ENCODE measurements at regions of chr17 and their contacts with region 1.

Region 1: GRCh38 chr17:11935734-11936406 is 61.4 kb downstream of the ZNF18 start:
- DNase-seq: peak; percentile 57
- H3K4me3 ChIP-seq: peak overlapping the region in 1 of 2 experiments; percentile 41; a peak in 1 of 4 replicates
- H3K27ac ChIP-seq: no peak overlapping the region
- H3K4me1 ChIP-seq: no peaks in the 10 kb centered on the region
- H3K27me3 ChIP-seq: no peaks in the 10 kb centered on the region
- CTCF ChIP-seq: peak; percentile 50
- EP300 ChIP-seq: no peak
- RAD21 ChIP-seq: peak; percentile 84

Region 2: DNA sequence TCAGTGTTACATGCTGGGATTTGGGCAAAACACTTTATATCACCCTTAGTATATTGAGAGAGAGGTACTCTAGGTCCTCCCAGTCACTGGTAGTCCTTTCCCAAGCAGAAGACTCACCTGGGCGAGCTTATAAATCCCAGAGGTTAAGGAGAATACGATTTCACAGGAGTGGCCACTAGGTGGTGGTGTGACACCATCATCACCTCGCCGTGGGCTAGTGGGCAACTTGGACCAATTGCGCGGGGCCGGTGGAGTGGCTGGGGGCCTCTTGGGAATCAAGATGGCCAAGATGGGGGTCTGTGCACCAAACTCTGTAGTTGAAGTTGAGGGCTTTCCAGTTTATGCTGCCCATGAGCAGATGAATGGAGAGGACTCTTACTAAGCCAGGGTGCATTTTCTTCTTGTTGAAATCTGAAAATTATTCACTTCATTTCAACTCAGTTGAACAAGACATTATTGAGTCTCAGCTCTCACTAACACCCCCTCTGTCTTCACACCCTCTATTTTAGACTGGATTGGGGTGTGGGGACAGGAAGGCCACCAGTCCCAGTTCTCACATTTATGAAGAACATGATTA is 1059.8 kb before region 1 on chr17:
- CTCF ChIA-PET with region 1: interaction called, 54 read pairs
- POLR2A ChIA-PET with region 1: no interaction called
- DNase-seq: peak; percentile 58
- H3K4me3 ChIP-seq: no peak overlapping the region; a peak in 1 of 4 replicates
- H3K27ac ChIP-seq: no peak overlapping the region
- H3K4me1 ChIP-seq: no peaks in the 10 kb centered on the region
- H3K27me3 ChIP-seq: no peaks in the 10 kb centered on the region
- CTCF ChIP-seq: peak; percentile 55
- EP300 ChIP-seq: no peak
- RAD21 ChIP-seq: peak; percentile 77

Region 3: GRCh38 chr17:11857006-11857405 is 78.9 kb before region 1 on chr17:
- CTCF ChIA-PET with region 1: no interaction called
- POLR2A ChIA-PET with region 1: no interaction called
- DNase-seq: no peak
- H3K4me3 ChIP-seq: no peak overlapping the region
- H3K27ac ChIP-seq: no peak overlapping the region
- H3K4me1 ChIP-seq: no peaks in the 10 kb centered on the region
- H3K27me3 ChIP-seq: no peaks in the 10 kb centered on the region
- CTCF ChIP-seq: no peak
- EP300 ChIP-seq: no peak
- RAD21 ChIP-seq: no peak

Region 4: GRCh38 chr17:11925262-11926021 is 10.4 kb before region 1 on chr17:
- CTCF ChIA-PET with region 1: interaction called, 10 read pairs
- POLR2A ChIA-PET with region 1: no interaction called
- DNase-seq: no peak
- H3K4me3 ChIP-seq: no peak overlapping the region
- H3K27ac ChIP-seq: no peak overlapping the region
- H3K4me1 ChIP-seq: no peaks in the 10 kb centered on the region
- H3K27me3 ChIP-seq: no peaks in the 10 kb centered on the region
- CTCF ChIP-seq: no peak
- EP300 ChIP-seq: no peak
- RAD21 ChIP-seq: no peak

Region 5: GRCh38 chr17:11969565-11969964 is 33.7 kb after region 1 on chr17:
- CTCF ChIA-PET with region 1: interaction called, 11 read pairs
- POLR2A ChIA-PET with region 1: no interaction called
- DNase-seq: no peak
- H3K4me3 ChIP-seq: no peak overlapping the region
- H3K27ac ChIP-seq: no peak overlapping the region
- H3K4me1 ChIP-seq: no peaks in the 10 kb centered on the region
- H3K27me3 ChIP-seq: no peaks in the 10 kb centered on the region
- CTCF ChIP-seq: no peak
- EP300 ChIP-seq: no peak
- RAD21 ChIP-seq: no peak

Region 6: GRCh38 chr17:12020642-12021622 is 85.1 kb after region 1 on chr17 and contains the start of gene MAP2K4:
- CTCF ChIA-PET with region 1: no interaction called
- POLR2A ChIA-PET with region 1: no interaction called
- DNase-seq: peak; percentile 97
- H3K4me3 ChIP-seq: peak within 1 kb of the TSS; percentile 70 to 79
- H3K27ac ChIP-seq: peak within 1 kb of the TSS; percentile 49 to 83
- H3K4me1 ChIP-seq: peaks cover 14 to 17% of the 10 kb centered on the region in 2 experiments; a peak in 3 of 4 replicates
- H3K27me3 ChIP-seq: no peaks in the 10 kb centered on the region
- CTCF ChIP-seq: no peak
- EP300 ChIP-seq: peak in 1 of 2 experiments; percentile 17; a peak in 1 of 4 replicates
- RAD21 ChIP-seq: no peak
- polyA plus RNA-seq, gene MAP2K4: 10.6 and 14.0 TPM in 2 replicates

Region 7: DNA sequence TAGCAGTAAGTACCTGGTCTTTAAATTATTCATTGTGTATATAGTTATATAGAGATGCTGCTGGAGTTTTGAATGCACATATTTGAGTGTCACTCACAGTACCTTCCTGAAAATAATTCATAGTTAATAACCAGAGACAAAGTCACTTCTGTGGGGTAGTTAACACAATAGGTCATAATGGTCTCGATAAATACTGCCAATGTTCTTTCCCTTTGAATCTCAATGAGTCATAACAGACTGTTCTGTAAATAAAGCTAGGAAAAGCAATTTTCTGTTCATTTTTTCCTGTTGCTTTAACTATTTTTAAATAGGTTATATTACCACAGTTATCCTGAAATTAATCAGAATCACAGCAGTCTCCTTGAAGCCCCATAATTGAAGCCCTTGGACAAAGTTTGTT is 172.0 kb after region 1 on chr17:
- CTCF ChIA-PET with region 1: no interaction called
- POLR2A ChIA-PET with region 1: no interaction called
- DNase-seq: no peak
- H3K4me3 ChIP-seq: no peak overlapping the region
- H3K27ac ChIP-seq: no peak overlapping the region
- H3K4me1 ChIP-seq: peaks cover 0 to 27% of the 10 kb centered on the region in 2 experiments; a peak in 3 of 4 replicates
- H3K27me3 ChIP-seq: no peaks in the 10 kb centered on the region
- CTCF ChIP-seq: no peak
- EP300 ChIP-seq: no peak
- RAD21 ChIP-seq: no peak

Region 8: DNA sequence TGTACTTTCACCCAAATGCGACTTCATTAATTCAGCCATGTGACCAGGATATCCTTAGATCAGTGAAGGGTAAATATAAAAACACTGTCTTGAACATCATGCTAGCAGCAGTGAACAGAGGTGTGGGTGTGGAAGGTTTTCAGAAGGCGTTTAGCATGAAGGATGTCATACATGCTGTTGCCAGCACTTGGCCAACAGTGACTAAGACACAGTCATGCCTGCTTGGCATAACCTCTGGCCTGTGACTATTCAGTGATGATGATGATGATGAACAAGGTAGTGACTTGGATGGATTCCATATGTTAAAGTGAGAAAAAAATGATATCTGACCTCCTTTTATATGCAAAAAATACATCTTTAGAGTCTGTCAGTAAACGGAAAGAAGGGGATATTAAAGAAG is 182.7 kb after region 1 on chr17:
- CTCF ChIA-PET with region 1: no interaction called
- POLR2A ChIA-PET with region 1: no interaction called
- DNase-seq: no peak
- H3K4me3 ChIP-seq: no peak overlapping the region
- H3K27ac ChIP-seq: no peak overlapping the region
- H3K4me1 ChIP-seq: no peaks in the 10 kb centered on the region
- H3K27me3 ChIP-seq: no peaks in the 10 kb centered on the region
- CTCF ChIP-seq: no peak
- EP300 ChIP-seq: no peak
- RAD21 ChIP-seq: no peak